ENCODE measurements at regions of chr2 and their contacts with region 1.

Region 1: GRCh38 chr2:42028571-42029148 is 19.2 kb upstream of the PKDCC start:
- DNase-seq: no peak
- H3K4me3 ChIP-seq: no peak overlapping the region
- H3K27ac ChIP-seq: no peak overlapping the region
- H3K4me1 ChIP-seq: peaks cover 30 to 32% of the 10 kb centered on the region in 2 experiments
- H3K27me3 ChIP-seq: no peaks in the 10 kb centered on the region
- CTCF ChIP-seq: no peak
- EP300 ChIP-seq: no peak
- RAD21 ChIP-seq: no peak

Region 2: DNA sequence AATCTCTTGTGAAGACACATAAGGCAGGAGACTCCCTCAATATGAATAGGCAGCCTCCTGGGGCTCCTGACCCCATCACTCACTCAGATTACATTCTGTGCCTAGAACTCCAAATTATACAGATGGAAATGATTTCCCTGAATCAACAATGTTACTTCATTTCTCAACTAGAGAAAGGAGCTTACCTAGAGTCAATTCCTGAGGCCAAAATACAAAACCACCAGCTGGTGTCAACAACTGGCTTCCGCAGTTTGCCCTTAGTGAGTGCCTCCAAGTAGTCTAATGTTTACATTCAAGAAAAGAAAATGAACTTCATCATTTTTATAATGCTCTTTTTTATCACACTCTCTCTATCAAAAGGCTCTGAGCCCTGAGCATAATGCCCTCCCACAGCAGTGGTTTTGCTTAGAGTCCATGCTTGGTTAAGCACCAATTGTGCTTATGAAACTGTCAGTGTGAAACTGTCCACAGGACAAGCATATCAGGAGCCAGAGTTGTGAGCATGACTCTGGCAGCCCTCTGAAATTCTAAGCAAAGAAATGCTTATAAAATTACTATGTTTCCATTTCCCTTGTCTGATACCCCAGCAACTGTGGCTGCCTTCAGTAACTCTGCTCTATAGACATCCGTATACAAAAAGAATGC is 286.6 kb before region 1 on chr2:
- CTCF ChIA-PET with region 1: no interaction called
- POLR2A ChIA-PET with region 1: no interaction called
- DNase-seq: no peak
- H3K4me3 ChIP-seq: no peak overlapping the region
- H3K27ac ChIP-seq: no peak overlapping the region
- H3K4me1 ChIP-seq: no peaks in the 10 kb centered on the region
- H3K27me3 ChIP-seq: no peaks in the 10 kb centered on the region
- CTCF ChIP-seq: no peak
- EP300 ChIP-seq: no peak
- RAD21 ChIP-seq: no peak

Region 3: DNA sequence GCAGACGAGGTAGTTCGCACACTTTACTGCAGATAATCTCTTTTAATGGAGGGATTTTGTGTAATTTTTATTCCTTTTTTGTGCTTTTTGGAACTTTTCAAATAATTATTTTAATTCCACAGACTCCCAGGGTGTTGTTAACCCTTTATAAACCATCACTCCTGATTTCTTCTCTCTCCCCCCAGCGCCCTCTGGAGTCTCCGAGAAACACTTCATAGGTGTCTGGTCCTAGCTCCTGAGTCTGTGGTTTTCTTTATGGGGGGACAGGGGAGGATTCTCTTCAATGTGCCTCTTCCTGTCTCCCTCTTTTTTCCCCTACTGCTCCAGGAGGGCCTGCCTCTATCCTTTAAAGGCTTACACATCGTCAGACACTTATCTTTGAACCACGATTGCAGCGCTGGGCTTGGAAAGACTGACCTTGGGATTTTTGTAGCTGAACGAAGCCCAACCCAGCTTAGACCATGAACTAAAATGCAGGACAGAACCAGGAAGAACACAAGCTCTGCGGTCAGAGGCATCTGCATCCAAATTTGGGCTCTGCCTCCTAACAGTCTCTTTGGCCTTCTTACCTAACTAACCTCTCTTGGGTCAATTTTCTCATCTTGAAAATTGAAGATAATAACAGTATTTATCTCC is 12.1 kb after region 1 on chr2:
- CTCF ChIA-PET with region 1: interaction called, 18 read pairs
- POLR2A ChIA-PET with region 1: interaction called, 26 read pairs
- DNase-seq: no peak
- H3K4me3 ChIP-seq: no peak overlapping the region
- H3K27ac ChIP-seq: no peak overlapping the region
- H3K4me1 ChIP-seq: peaks cover 0 to 20% of the 10 kb centered on the region in 2 experiments; a peak in 2 of 4 replicates
- H3K27me3 ChIP-seq: 0 out of 2 replicates have a peak, but pooled peaks cover 17% of the 10 kb centered on the region
- CTCF ChIP-seq: no peak; the same call in 1 of the 2 replicates
- EP300 ChIP-seq: no peak
- RAD21 ChIP-seq: 0 out of 2 replicates have a peak, but pooled peaks have one; percentile 27

Region 4: GRCh38 chr2:42095923-42096408 is 67.3 kb after region 1 on chr2:
- CTCF ChIA-PET with region 1: no interaction called
- POLR2A ChIA-PET with region 1: no interaction called
- DNase-seq: peak; percentile 78
- H3K4me3 ChIP-seq: no peak overlapping the region
- H3K27ac ChIP-seq: peak overlapping the region in 1 of 2 experiments; percentile 24; a peak in 2 of 4 replicates
- H3K4me1 ChIP-seq: peaks cover 0 to 15% of the 10 kb centered on the region in 2 experiments; a peak in 1 of 4 replicates
- H3K27me3 ChIP-seq: no peaks in the 10 kb centered on the region
- CTCF ChIP-seq: peak; percentile 98
- EP300 ChIP-seq: no peak; a peak in 1 of 4 replicates
- RAD21 ChIP-seq: peak; percentile 100

Measured in SK-N-SH (cell line).